Gastrocnemius medialis (tissue), 4 donors: ENCODE measurements at regions of chr10 and their contacts with region 1.

Region 1: GRCh38 chr10:61896854-61897661 is 4.4 kb upstream of the ARID5B start:
- DNase-seq: peak in 1 of 2 donors; percentile 45
- ATAC-seq: peak; percentile 51 to 76
- H3K4me3 ChIP-seq: peak overlapping the region; percentile 43 to 49 (median 44)
- H3K27ac ChIP-seq: peak overlapping the region; percentile 19 to 54 (median 43)
- H3K4me1 ChIP-seq: peaks cover 22 to 41% of the 10 kb centered on the region in 2 donors
- H3K27me3 ChIP-seq: no peaks in the 10 kb centered on the region
- CTCF ChIP-seq: peak; percentile 28 to 75 (median 67)
- POLR2A ChIP-seq: no peak

Region 2: GRCh38 chr10:61835069-61835945 is 61.8 kb before region 1 on chr10:
- in situ Hi-C with region 1: no loop called
- intact Hi-C with region 1: no loop called
- DNase-seq: no peak
- ATAC-seq: peak in 1 of 2 donors; percentile 49
- H3K4me3 ChIP-seq: peak overlapping the region in 1 of 4 donors; percentile 8
- H3K27ac ChIP-seq: peak overlapping the region in 2 of 4 donors; percentile 53 to 72
- H3K4me1 ChIP-seq: peaks cover 25 to 26% of the 10 kb centered on the region in 2 donors
- H3K27me3 ChIP-seq: no peaks in the 10 kb centered on the region
- CTCF ChIP-seq: peak in 2 of 5 experiments; percentile 23 to 35
- POLR2A ChIP-seq: no peak

Region 3: DNA sequence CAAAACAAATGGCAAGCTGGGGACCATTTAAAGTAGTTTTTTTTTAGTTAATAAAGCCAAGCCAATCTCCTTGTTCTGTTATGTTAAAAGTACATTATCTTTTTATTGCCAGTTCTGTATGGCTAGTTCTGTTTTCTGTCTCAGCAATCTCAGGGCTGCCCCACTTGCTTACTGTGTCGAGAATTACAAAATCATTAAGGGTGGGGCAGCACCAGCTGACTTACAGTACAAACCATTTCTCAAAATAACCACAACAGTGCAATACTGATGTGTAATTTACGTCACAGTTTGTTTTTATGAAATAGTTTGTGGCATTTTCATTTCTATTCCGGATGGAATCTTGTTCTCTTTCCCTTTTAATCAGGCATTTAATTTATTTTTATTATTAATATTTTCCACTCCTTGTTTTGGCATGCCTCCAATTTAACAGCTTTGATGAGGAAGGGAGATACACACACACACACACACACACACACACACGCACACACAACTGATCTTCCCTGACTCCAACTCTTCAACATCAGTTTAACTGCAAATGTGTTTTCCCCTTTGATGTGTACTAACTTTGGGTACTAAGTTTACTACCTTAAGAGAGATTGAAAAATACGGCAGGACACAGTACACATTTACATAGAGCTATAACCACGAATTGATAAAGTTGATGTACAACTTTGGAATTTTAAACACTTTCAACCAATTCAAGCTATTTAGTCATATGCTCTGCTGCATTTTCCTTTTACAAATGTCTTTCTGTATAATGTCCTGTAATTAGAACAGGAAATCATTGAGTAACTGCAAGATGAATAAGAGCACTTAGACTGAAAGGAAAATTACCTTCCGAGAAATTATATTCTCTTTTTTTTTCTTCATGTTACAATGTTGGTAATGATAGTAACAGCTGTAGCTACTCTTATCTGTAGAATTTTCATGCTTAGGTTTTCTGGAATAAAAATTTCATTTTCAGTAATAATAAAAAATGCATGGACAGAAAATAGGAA is 95.9 kb after region 1 on chr10:
- in situ Hi-C with region 1: no loop called
- intact Hi-C with region 1: loop called (anchors 2 kb)
- DNase-seq: peak; percentile 59 to 70
- ATAC-seq: peak; percentile 97 to 98
- H3K4me3 ChIP-seq: peak overlapping the region; percentile 14 to 44 (median 36)
- H3K27ac ChIP-seq: peak overlapping the region; percentile 64 to 73 (median 66)
- H3K4me1 ChIP-seq: peaks cover 17 to 42% of the 10 kb centered on the region in 2 donors
- H3K27me3 ChIP-seq: no peaks in the 10 kb centered on the region
- CTCF ChIP-seq: no peak
- POLR2A ChIP-seq: peak in 1 of 2 donors; percentile 20

Region 4: GRCh38 chr10:62011558-62011957 is 114.5 kb after region 1 on chr10:
- in situ Hi-C with region 1: no loop called
- intact Hi-C with region 1: no loop called
- DNase-seq: no peak
- ATAC-seq: no peak
- H3K4me3 ChIP-seq: no peak overlapping the region
- H3K27ac ChIP-seq: no peak overlapping the region
- H3K4me1 ChIP-seq: peaks cover 5 to 13% of the 10 kb centered on the region in 2 donors
- H3K27me3 ChIP-seq: no peaks in the 10 kb centered on the region
- CTCF ChIP-seq: no peak
- POLR2A ChIP-seq: no peak

Region 5: GRCh38 chr10:62038609-62039190 is 141.6 kb after region 1 on chr10:
- in situ Hi-C with region 1: loop called in 1 of 4 experiments (anchors 5 kb)
- intact Hi-C with region 1: loop called (anchors 2 kb)
- DNase-seq: peak; percentile 48 to 65
- ATAC-seq: peak; percentile 73 to 85
- H3K4me3 ChIP-seq: peak overlapping the region in 3 of 4 donors; percentile 4 to 43 (median 27)
- H3K27ac ChIP-seq: peak overlapping the region in 2 of 4 donors; percentile 1 to 50
- H3K4me1 ChIP-seq: peaks cover 21 to 39% of the 10 kb centered on the region in 2 donors
- H3K27me3 ChIP-seq: no peaks in the 10 kb centered on the region
- CTCF ChIP-seq: peak; percentile 80 to 92 (median 89)
- POLR2A ChIP-seq: no peak

Region 6: GRCh38 chr10:62231371-62231770 is 334.3 kb after region 1 on chr10:
- in situ Hi-C with region 1: loop called in 1 of 4 experiments (anchors 10 kb)
- intact Hi-C with region 1: no loop called
- DNase-seq: no peak
- ATAC-seq: no peak
- H3K4me3 ChIP-seq: no peak overlapping the region
- H3K27ac ChIP-seq: no peak overlapping the region
- H3K4me1 ChIP-seq: no peaks in the 10 kb centered on the region
- H3K27me3 ChIP-seq: no peaks in the 10 kb centered on the region
- CTCF ChIP-seq: no peak
- POLR2A ChIP-seq: no peak

Region 7: GRCh38 chr10:62244780-62245467 is 347.9 kb after region 1 on chr10:
- in situ Hi-C with region 1: loop called (anchors 5 to 25 kb)
- intact Hi-C with region 1: loop called (anchors 2 kb)
- DNase-seq: peak; percentile 29 to 41
- ATAC-seq: peak; percentile 82 to 83
- H3K4me3 ChIP-seq: no peak overlapping the region
- H3K27ac ChIP-seq: no peak overlapping the region
- H3K4me1 ChIP-seq: peaks cover 6 to 12% of the 10 kb centered on the region in 2 donors
- H3K27me3 ChIP-seq: no peaks in the 10 kb centered on the region
- CTCF ChIP-seq: peak; percentile 75 to 88 (median 83)
- POLR2A ChIP-seq: no peak

Region 8: GRCh38 chr10:62250594-62251198 is 353.6 kb after region 1 on chr10:
- in situ Hi-C with region 1: loop called in 3 of 4 experiments (anchors 5 to 25 kb)
- intact Hi-C with region 1: loop called (anchors 2 kb)
- DNase-seq: no peak
- ATAC-seq: peak; percentile 21 to 42
- H3K4me3 ChIP-seq: no peak overlapping the region
- H3K27ac ChIP-seq: no peak overlapping the region
- H3K4me1 ChIP-seq: no peaks in the 10 kb centered on the region
- H3K27me3 ChIP-seq: no peaks in the 10 kb centered on the region
- CTCF ChIP-seq: no peak
- POLR2A ChIP-seq: no peak

Region 9: DNA sequence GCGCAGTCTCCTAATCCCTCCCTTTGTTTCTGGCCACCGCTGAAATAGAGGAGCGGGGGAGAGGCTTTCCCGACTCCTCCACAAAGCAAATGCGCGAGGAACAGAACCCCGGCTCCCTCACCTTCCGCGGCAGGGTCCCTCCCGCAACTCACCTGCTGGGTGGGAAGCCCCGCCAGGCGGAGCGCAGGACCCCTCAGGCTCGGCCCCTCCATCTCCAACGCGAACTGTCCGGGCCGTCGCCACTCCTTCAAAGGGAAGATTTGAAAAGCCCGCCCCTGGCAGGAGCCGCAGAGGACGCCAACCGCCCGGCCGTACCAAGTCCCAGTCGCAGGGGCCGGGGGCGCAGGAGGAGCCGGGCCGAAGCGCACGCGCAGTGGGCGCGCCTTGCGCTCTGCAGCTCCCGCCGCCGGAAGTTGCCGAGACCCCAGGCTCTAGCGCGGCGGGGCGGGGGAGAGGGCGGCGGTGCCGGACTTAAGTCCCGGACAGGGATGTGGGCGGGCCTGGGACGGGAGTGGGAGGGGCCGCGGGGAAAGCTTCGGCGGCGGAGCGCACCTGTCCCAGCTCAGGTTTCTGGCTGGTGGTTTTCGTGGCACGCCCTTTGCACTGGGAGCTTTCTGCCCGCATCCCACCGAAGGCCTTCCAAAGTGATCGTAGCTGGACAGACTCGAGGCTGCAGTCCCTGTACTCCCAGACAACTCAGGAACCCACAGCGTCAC is 371.5 kb after region 1 on chr10 and contains the start of gene RTKN2:
- in situ Hi-C with region 1: loop called in 2 of 4 experiments (anchors 25 kb)
- intact Hi-C with region 1: no loop called
- DNase-seq: peak; percentile 48 to 60
- ATAC-seq: peak; percentile 74 to 93
- H3K4me3 ChIP-seq: peak within 1 kb of the TSS; percentile 66 to 96 (median 80)
- H3K27ac ChIP-seq: no peak within 1 kb of the TSS
- H3K4me1 ChIP-seq: peaks cover 11 to 15% of the 10 kb centered on the region in 2 donors
- H3K27me3 ChIP-seq: peaks cover 10 to 17% (median 15%) of the 10 kb centered on the region in 3 donors
- CTCF ChIP-seq: no peak
- POLR2A ChIP-seq: no peak
- total RNA-seq, gene RTKN2: not detected